Activated naive CD4-positive, alpha-beta T cell treated with anti-CD3 and anti-CD28 coated beads, Interleukin-2, amount 10 ng/mL, durations not matched to agents 7 days and 5 days (primary cell): ENCODE measurements at regions of chr15 and their contacts with region 1.

Region 1: DNA sequence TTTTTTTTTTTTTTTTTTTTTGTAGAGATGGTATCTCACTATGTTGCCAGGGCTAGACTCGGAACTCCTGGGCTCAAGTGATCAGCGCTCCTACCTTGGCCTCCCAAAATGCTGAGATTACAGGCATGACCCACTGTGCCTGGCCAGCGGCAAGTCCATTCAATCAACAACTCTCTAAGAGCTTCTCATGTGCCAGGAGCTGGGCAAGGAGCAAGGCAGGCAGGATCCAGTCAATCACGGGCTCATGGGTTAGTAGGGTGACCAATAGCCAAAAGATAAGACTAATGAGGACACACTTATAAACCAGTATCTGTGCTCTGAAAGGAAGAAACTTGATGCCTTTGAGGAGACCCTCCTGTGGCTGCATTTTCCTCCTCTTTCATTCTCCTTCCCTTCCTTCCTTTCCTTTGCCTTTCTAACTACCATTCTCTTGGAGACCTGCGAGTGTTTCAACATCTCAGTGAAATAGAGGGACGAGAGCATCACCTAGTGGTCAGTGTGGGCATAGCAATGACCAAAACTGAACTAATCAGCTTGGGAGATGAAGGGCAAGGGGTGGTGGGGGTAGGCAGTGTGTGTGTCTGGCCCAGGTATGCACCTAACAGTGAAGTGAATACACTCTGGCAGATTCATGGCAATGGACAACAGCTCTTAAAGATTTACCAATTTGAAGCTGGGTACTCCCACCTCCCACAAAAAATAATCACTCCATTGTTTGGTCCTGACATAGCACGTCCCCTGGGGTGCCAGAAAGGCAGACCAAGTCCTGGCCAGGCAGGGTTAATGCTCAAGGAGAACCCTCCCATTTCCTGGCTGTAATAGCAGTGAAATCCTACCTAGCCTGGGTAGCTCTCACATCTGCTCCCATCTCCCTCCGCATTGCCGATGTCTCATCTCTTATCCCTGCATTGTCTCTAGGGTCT is 6.2 kb downstream of the RPP25 start:
- DNase-seq: peak; percentile 88
- H3K4me3 Mint-ChIP-seq: no peak overlapping the region
- H3K27ac Mint-ChIP-seq: no peak overlapping the region
- H3K4me1 Mint-ChIP-seq: peaks cover 15% of the 10 kb centered on the region
- H3K27me3 Mint-ChIP-seq: peaks cover 29% of the 10 kb centered on the region

Region 2: DNA sequence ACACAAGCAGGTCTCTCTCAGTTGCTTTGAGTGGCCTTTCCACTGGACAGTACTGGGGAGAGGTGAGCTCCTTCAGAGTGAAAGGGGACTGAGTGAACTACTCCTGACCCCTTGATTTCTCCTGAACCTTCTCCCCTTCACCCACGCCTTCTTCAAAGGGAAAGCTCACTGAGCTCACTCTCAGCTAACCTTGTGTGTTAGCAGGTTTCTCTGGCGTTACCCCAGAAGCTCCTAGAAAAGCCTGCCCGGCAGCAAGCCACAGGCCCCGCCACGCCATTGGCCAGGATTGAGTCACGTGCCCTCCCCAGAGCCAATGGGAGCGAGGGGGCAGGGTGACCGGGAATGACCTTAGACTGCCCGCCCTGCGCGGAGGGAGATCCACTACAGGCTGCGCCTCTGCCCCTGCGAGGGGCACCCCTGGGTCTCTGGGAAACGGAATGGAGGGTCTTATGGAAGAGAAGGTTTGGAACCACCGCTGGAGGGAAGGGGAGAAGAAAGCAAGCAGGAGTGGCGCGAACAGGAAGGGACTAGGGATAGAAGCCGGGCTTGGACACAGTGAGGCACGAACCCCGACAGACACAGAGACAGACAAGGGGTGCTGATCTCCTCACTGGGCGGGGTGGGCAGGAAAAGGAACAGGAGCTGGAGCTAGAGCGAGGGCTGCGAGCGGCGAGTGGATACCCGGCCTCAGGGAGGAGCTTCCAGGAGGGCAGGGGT is 352.1 kb before region 1 on chr15:
- CTCF ChIA-PET with region 1: no interaction called
- DNase-seq: peak; percentile 94
- H3K4me3 Mint-ChIP-seq: peak overlapping the region; percentile 94
- H3K27ac Mint-ChIP-seq: peak overlapping the region; percentile 94
- H3K4me1 Mint-ChIP-seq: peaks cover 19% of the 10 kb centered on the region
- H3K27me3 Mint-ChIP-seq: no peaks in the 10 kb centered on the region

Region 3: DNA sequence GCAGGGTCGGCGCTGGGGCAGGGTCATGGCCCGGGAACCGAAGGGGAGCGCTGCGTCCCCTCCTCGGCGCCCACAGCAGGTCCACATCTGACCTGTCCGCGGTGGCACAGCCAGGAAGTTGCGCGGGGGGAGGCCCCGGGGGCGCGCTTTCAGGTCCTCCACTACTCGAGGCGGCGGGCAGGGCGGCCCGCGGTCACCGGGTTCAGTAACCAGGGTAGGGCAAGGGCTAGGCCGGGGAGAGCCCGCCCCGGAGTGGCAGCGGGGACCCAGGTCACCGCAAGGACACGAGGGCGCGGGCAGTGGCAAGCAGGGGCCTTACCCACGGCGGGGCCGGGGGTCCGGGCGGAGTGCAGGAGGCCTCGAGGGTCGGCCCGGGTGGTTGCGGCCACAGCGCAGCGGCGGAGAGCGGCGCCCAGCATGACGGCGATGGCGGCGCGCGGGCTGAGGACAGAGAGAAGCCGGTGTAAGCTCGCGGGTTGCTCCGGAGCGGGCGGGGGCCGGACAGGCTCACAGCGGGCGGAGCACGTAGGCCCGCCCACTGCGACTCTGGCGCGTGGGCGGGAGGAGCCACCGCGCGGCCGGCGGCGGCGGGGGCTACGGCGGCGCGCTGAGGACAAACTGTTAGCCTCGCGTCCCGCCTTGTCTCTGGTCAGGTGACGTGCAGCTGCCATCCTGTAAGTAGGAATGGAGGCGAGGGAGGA is 12.6 kb before region 1 on chr15 and contains the start of gene COX5A:
- CTCF ChIA-PET with region 1: interaction called, 19 read pairs
- DNase-seq: peak; percentile 94
- H3K4me3 Mint-ChIP-seq: peak within 1 kb of the TSS; percentile 91
- H3K27ac Mint-ChIP-seq: peak within 1 kb of the TSS; percentile 91
- H3K4me1 Mint-ChIP-seq: peaks cover 37% of the 10 kb centered on the region
- H3K27me3 Mint-ChIP-seq: peaks cover 15% of the 10 kb centered on the region

Region 4: DNA sequence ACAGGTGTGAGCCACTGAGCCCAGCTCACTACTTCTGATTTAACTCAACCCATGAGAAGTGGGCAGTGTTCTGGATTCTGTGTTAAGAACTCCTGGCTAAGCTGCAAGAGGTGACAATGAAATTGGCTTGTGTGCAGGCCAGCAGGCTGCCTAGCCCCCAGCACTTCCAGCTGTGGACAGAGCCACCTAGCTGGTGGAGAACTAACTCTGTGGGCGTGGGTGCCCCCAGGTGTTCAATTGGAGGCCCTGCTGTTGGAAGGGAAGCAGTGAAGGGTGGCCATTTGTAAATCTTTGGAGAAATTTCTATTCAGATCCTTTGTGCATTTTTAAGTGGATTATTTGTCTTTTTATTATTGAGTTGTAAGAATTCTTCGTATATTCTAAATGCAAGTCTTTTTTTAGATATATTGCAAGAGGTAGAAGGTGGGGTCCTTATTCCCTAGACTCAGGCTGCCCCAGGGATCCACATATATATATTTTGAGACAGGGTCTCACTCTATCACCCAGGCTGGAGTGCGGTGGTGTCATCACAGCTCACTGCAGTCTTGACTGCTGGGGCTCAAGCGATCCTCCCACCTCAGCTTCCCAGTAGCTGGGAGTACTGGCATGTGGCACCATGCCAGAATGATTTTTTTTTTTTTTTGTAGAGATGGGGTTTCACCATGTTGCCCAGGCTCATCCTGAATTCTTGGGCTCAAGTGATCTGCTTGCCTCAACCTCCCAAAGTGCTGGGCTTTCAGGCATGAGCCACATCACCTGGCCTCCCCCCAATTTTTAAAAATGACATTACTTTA is 37.9 kb after region 1 on chr15:
- CTCF ChIA-PET with region 1: interaction called, 13 read pairs
- DNase-seq: peak; percentile 69
- H3K4me3 Mint-ChIP-seq: no peak overlapping the region
- H3K27ac Mint-ChIP-seq: no peak overlapping the region
- H3K4me1 Mint-ChIP-seq: peaks cover 6% of the 10 kb centered on the region
- H3K27me3 Mint-ChIP-seq: peaks cover 25% of the 10 kb centered on the region